Left ventricle myocardium superior (tissue), 1 donor: ENCODE measurements at regions of chr14 and their contacts with region 1.

Region 1: DNA sequence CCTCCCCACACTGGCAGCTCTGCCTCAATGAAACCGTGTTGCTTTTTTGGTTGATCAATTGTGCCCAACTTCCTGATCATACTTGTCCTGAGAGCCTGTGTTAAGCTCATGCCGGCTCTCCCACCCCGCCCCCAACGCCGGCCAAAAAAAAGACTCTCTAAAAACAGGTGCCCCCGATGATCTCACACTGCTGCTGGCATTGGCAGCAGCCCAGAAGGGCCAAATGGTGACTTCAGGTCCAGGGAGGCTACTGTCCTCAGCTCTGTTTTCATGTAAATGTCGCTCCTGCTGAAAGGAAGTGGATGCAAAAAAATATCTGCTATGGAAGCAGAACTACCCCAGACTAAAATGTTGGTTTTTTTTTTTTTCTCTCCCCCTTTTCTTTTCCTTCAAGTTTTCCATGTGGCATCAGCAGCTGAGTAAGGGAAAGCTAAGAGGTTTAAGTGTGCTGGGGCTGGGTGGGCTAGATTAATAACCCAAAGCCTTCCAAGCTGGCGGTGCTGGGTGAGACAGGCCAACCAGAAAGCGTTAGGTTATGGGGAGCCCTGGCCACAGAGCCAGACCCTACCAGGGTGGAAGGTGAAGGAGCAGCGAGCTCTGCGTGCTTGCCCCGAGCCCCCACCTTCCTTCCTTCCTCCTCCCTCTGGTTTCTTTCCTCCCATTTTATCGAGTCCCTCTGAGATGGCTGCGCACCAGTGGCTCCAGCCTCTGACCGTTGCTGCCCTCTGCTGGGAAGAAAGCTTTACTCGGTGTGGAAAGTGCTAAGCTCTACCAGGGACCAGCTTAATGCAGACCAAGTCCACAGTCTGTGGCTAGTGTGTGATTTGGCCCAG is 396.1 kb downstream of the NRXN3 start:
- DNase-seq: peak; percentile 64
- ATAC-seq: peak; percentile 94

Region 2: DNA sequence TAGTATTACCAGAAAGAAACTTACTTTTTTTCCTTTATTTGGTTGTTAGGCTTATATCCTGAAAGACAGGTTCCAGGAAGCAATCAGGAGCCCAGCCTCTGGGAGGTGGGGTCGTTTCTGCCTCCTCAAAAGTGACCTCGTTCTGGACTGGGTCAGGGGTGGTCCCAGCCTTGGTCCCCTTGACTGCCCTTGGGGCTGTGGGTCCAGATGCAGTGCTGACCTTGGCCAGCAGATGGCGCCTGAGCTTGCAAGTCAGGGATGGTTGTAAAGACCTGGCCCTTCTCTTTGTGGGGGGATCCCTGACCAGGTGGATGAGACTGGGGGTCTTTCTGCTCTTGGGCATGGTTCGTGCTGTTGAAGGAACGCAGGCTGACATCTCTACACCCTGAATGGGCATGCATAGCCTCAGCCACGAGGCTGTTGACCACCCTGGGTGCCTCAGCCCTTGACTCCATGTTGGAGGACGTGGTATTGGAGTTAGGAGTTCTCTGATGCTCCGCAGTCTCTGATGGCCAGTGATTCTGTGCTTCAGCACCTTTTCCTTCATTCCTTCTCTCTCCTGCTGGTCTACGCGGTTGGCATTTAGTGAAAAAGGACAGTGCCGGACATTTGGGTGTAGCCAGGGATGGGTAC is 704.0 kb before region 1 on chr14:
- intact Hi-C with region 1: loop called (anchors 5 kb)
- DNase-seq: peak; percentile 87
- ATAC-seq: peak; percentile 82

Region 3: DNA sequence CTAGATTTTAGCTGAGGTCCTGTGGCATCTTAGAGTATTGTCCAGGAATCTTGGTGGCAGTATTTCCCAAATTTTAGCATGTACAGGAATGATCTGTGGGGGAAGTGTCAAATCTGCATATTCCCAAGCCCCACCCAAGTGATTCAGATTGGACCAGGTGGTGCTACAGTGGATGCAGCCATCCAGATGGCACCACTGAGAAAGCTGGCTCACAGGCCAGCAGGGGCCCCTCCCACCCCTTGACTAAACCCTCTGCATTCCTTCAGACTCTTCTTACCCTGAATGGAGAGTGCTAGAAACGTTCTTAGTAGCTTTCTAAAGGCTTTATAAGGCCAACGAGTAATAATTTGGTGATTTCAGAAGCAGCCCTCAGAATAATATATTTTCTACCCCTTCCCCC is 140.9 kb before region 1 on chr14:
- intact Hi-C with region 1: no loop called
- DNase-seq: no peak
- ATAC-seq: no peak

Region 4: DNA sequence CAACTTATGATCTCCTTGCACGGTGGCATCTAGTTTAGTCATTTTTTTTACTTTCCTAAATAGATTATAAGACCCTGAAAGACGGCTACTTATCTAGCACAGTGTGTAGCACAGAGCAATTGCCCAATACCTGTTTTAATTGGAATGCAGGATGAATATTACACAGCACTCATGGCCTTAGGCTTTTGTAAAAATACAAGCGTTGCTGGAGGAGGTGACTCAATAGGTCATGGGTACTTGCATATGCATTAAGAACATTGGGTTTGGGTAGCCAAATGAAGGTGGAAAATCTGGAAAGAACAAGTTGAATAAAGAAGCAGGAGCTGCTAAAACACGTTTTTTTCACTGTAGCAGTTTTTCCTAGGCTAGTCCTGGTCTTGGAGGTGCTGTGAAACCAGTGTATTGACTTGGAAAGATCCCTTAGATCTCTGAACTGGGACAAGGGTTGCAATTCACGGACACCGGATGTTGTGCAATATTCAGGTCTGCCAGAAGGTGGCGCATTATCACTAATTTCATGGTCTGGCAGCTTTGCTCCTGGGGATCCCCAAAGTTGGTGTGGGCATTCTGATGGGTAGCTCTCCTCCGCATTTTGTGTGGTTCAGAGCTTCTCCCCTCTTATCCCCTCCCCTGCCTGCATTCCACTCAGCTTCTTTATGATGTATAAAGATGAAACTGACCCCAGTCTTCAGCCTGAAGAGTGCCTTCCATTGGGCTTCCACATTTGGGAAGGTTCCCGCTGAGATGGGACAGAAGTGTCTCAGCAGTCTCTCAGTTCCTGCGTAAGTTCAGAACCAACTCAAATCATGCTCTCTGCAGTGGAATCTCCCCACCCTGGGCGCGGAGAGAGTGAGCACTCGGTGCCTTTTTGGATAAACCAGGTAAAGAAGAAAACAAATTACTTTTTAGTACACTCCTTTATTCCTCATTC is 117.8 kb before region 1 on chr14:
- intact Hi-C with region 1: loop called (anchors 10 kb)
- DNase-seq: no peak
- ATAC-seq: no peak